Sigmoid colon (tissue), 7 donors: ENCODE measurements at regions of chr13 and their contacts with region 1.

Region 1: GRCh38 chr13:41061075-41061913 is at the start of gene WBP4:
- DNase-seq: peak; percentile 97
- H3K4me3 ChIP-seq: peak within 1 kb of the TSS; percentile 61 to 93 (median 80)
- H3K27ac ChIP-seq: peak within 1 kb of the TSS; percentile 91 to 99 (median 98)
- H3K4me1 ChIP-seq: peaks cover 0 to 76% (median 67%) of the 10 kb centered on the region in 4 donors
- H3K27me3 ChIP-seq: no peaks in the 10 kb centered on the region
- CTCF ChIP-seq: no peak
- EP300 ChIP-seq: peak in 2 of 4 donors; percentile 52 to 64
- POLR2A ChIP-seq: peak; percentile 43 to 66
- total RNA-seq, gene WBP4: 11.6 to 25.0 (median 18.4) TPM

Region 2: DNA sequence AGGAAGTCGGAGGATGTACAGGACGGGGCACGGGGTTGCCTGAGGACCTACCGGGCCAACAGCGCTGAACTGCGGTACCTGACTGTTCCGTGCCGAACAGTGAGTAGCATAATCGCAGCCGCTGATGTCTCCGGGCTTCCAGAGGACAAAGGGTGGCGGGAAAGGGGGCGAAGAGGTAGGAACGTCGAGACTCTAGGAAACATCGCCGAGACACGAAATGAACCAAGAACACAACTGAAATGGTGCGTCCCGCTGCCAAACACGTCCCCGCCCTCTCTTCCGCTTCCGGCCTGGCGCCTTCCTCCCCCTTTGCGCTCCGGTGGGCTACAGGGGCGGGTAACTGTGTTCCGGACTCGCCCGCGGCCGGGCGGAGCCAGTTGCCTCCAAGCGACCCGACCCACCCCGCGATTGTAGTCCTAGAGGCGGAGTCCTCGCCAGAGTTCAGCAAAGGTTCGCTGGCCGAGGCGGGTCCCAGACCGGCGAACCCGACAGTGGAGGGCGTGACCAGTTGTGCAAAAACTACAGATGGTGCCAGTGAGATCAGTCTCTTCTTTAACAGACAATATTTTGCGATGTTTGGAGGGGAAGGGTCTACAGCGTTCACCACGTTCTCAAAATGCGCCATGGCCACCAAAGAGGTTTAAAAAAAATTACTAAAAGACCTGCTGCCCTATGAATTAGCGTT is 290.2 kb before region 1 on chr13 and contains the start of gene MRPS31:
- intact Hi-C with region 1: loop called (anchors 5 kb)
- DNase-seq: peak; percentile 97
- H3K4me3 ChIP-seq: peak within 1 kb of the TSS; percentile 68 to 83 (median 71)
- H3K27ac ChIP-seq: peak within 1 kb of the TSS; percentile 85 to 89 (median 86)
- H3K4me1 ChIP-seq: peaks cover 0 to 13% (median 9%) of the 10 kb centered on the region in 4 donors
- H3K27me3 ChIP-seq: no peaks in the 10 kb centered on the region
- CTCF ChIP-seq: no peak
- EP300 ChIP-seq: peak in 1 of 4 donors; percentile 4
- POLR2A ChIP-seq: peak in 1 of 2 donors; percentile 56
- total RNA-seq, gene MRPS31: 11.4 to 23.3 (median 21.1) TPM

Region 3: DNA sequence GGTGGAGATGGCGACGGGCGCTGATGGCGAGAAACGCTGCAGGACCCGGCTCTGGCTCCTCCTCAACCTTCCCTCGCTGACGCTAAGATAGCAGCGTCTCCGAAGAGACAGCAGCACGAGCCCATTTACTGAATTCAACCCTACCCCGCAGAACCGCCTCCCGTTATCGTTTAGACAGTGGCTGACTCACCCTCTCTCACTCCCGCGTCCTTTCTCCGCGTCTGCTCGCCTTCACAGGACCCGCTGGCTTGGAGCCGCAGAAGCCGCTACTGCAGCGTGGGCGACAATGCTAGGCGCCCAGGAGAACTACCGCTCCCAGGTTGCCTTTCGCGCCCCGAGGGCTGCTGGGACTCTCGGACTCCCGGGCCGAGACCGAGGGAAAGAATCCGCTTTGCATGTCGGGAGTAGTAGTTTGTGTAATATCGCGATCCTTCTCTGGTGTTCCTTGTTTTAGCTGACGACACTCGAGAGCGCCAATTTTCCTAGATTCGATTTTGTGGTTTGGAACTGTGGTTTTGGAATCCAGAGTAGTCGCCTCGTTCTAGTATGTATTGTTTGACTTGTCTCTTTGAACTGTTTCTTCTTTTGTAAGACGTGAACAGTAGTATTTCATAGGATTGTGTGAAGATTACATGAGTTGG is 71.3 kb after region 1 on chr13 and contains the start of gene KBTBD6:
- intact Hi-C with region 1: loop called (anchors 2 kb)
- DNase-seq: peak; percentile 97
- H3K4me3 ChIP-seq: peak within 1 kb of the TSS; percentile 66 to 85 (median 78)
- H3K27ac ChIP-seq: peak within 1 kb of the TSS; percentile 90 to 93 (median 91)
- H3K4me1 ChIP-seq: peaks cover 0 to 43% (median 32%) of the 10 kb centered on the region in 4 donors
- H3K27me3 ChIP-seq: no peaks in the 10 kb centered on the region
- CTCF ChIP-seq: no peak
- EP300 ChIP-seq: peak in 1 of 4 donors; percentile 54
- POLR2A ChIP-seq: peak; percentile 38 to 59
- total RNA-seq, gene KBTBD6: 6.7 to 10.7 (median 9.9) TPM

Region 4: GRCh38 chr13:41310963-41311606 is 249.8 kb after region 1 on chr13 and contains the start of gene NAA16:
- intact Hi-C with region 1: loop called (anchors 5 kb)
- DNase-seq: peak; percentile 95
- H3K4me3 ChIP-seq: peak within 1 kb of the TSS; percentile 72 to 98 (median 87)
- H3K27ac ChIP-seq: peak within 1 kb of the TSS; percentile 93 to 96 (median 94)
- H3K4me1 ChIP-seq: peaks cover 0 to 46% (median 28%) of the 10 kb centered on the region in 4 donors
- H3K27me3 ChIP-seq: no peaks in the 10 kb centered on the region
- CTCF ChIP-seq: peak in 2 of 4 experiments; percentile 16
- EP300 ChIP-seq: no peak
- POLR2A ChIP-seq: peak; percentile 51 to 67
- total RNA-seq, gene NAA16: 15.2 to 24.4 (median 18.1) TPM